ENCODE measurements at regions of chr11 and their contacts with region 1.

Region 1: DNA sequence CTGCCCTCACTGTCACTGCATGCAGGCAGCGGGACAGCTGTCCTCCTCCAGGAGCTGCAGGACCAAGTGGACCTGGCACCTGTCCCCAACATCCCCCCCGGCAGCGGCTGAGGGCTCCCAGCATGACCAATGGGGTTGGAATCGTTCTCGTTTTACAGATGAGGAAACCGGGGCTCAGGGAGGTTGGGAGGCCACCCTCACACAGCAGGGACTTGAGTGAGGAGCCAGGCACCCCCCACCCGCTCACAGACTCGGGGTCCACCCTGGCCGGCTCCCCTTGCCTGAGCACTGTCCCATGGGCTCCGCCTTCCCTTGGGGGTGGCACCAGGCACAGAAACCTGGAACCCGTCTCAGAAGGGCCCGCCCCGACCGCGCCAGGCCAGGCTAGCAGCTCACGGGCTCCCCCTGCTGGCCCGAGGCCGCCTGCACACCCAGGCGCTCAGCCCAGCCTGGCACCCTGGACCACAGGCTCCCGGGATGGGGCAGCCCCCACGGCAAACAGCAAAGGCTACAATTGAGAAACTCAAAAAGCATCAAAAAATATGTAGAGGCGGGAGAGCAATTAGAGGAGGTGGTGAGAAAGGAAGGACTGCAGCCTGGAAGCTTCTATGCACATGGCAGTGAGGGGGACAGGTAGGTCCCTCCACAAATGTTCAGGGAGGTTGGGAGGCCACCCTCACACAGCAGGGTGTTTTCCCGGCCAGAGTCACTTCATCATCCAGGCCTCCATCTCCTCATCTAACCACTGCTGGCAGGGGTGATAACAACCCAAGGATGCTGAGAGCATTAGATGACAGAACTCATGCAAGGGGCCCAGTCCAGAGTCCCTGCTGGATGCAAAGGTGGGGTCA is 12.8 kb downstream of the MACROD1 start:
- DNase-seq: no peak
- H3K4me3 ChIP-seq: peak overlapping the region in 2 of 4 donors; percentile 7 to 25
- H3K27ac ChIP-seq: no peak overlapping the region
- H3K4me1 ChIP-seq: peaks cover 19 to 26% (median 22%) of the 10 kb centered on the region in 4 donors
- H3K27me3 ChIP-seq: no peaks in the 10 kb centered on the region
- CTCF ChIP-seq: peak in 2 of 3 experiments; percentile 94 to 99
- EP300 ChIP-seq: no peak
- POLR2A ChIP-seq: no peak

Region 2: GRCh38 chr11:64000026-64000739 is 152.9 kb before region 1 on chr11:
- intact Hi-C with region 1: loop called (anchors 1 kb)
- DNase-seq: no peak
- H3K4me3 ChIP-seq: peak overlapping the region; percentile 46 to 52 (median 48)
- H3K27ac ChIP-seq: no peak overlapping the region
- H3K4me1 ChIP-seq: peaks cover 34 to 45% (median 42%) of the 10 kb centered on the region in 4 donors
- H3K27me3 ChIP-seq: peaks cover 0 to 15% (median 0%) of the 10 kb centered on the region in 4 donors
- CTCF ChIP-seq: peak; percentile 83 to 86 (median 84)
- EP300 ChIP-seq: no peak
- POLR2A ChIP-seq: no peak

Region 3: GRCh38 chr11:64071849-64072248 is 81.2 kb before region 1 on chr11:
- intact Hi-C with region 1: no loop called
- DNase-seq: no peak
- H3K4me3 ChIP-seq: no peak overlapping the region
- H3K27ac ChIP-seq: no peak overlapping the region
- H3K4me1 ChIP-seq: peaks cover 0 to 17% (median 11%) of the 10 kb centered on the region in 4 donors
- H3K27me3 ChIP-seq: no peaks in the 10 kb centered on the region
- CTCF ChIP-seq: no peak
- EP300 ChIP-seq: no peak
- POLR2A ChIP-seq: no peak